HEK293 (cell line): ENCODE measurements at regions of chr17 and their contacts with region 1.

Region 1: GRCh38 chr17:60743799-60744198 is 66.1 kb downstream of the BCAS3 start:
- H3K4me3 ChIP-seq: peak overlapping the region; percentile 1
- H3K27ac ChIP-seq: no peak overlapping the region
- H3K4me1 ChIP-seq: 0 out of 2 replicates have a peak, but pooled peaks cover 4% of the 10 kb centered on the region
- CTCF ChIP-seq: no peak

Region 2: GRCh38 chr17:60901806-60902205 is 158.0 kb after region 1 on chr17:
- CTCF ChIA-PET with region 1: no interaction called
- POLR2A ChIA-PET with region 1: no interaction called
- H3K4me3 ChIP-seq: no peak overlapping the region
- H3K27ac ChIP-seq: no peak overlapping the region
- H3K4me1 ChIP-seq: peaks cover 4% of the 10 kb centered on the region; the same call in 1 of the 2 replicates
- CTCF ChIP-seq: no peak

Region 3: GRCh38 chr17:60971515-60972369 is 227.9 kb after region 1 on chr17:
- CTCF ChIA-PET with region 1: interaction called, 19 read pairs
- POLR2A ChIA-PET with region 1: no interaction called
- H3K4me3 ChIP-seq: no peak overlapping the region
- H3K27ac ChIP-seq: no peak overlapping the region
- H3K4me1 ChIP-seq: no peaks in the 10 kb centered on the region
- CTCF ChIP-seq: no peak